HCT116 (cell line): ENCODE measurements at regions of chr10 and their contacts with region 1.

Region 1: GRCh38 chr10:43265799-43266721 is 805 bp downstream of the RASGEF1A start:
- DNase-seq: no peak
- ATAC-seq: peak; percentile 72
- H3K4me3 ChIP-seq: no peak overlapping the region
- H3K27ac ChIP-seq: no peak overlapping the region
- H3K4me1 ChIP-seq: no peaks in the 10 kb centered on the region
- H3K27me3 ChIP-seq: peaks cover 13% of the 10 kb centered on the region; the same call in 1 of the 2 replicates
- CTCF ChIP-seq: peak; percentile 40 to 53 (median 49); a peak in 5 of 6 replicates
- POLR2A ChIP-seq: no peak
- RAD21 ChIP-seq: peak; percentile 68

Region 2: DNA sequence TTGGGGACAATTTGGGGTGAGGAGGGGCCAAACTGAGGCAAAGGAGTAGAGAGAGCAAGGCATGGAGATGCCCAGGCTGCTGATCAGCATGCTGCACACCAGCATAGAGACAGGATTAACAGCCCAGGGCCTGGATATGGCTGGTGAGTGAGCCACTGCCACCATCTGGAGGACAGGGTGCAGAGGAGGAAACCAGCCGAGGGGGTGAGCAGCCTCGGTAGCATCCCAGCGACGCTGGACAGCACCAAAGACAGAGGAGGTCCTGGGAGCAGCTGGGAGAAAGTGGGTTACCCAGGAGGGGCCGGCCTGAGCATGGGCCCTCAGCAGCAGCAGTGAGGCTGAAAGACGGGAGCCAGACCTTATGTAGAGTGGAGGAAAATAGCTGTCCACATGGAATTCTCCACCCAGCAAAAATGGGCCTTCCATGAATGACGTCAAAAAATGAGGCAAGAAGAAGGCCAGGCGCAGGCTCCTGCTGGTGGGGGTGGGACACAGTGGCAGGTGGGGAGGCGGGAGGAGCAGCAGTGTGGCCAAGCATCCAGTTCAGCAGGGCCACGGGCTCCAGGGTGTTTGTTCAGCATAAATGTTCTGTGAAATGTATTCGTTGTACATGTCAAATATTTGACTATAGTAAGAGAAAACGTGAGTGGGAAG is 172.5 kb before region 1 on chr10:
- CTCF ChIA-PET with region 1: no interaction called
- POLR2A ChIA-PET with region 1: no interaction called
- RAD21 ChIA-PET with region 1: no interaction called
- intact Hi-C with region 1: no loop called
- DNase-seq: no peak
- ATAC-seq: peak; percentile 72
- H3K4me3 ChIP-seq: no peak overlapping the region
- H3K27ac ChIP-seq: no peak overlapping the region
- H3K4me1 ChIP-seq: no peaks in the 10 kb centered on the region
- H3K27me3 ChIP-seq: no peaks in the 10 kb centered on the region
- CTCF ChIP-seq: no peak
- POLR2A ChIP-seq: no peak
- RAD21 ChIP-seq: peak; percentile 34; the same call in 1 of the 2 replicates

Region 3: GRCh38 chr10:43255634-43256431 is 10.2 kb before region 1 on chr10:
- CTCF ChIA-PET with region 1: interaction called, 10 read pairs
- POLR2A ChIA-PET with region 1: no interaction called
- RAD21 ChIA-PET with region 1: interaction called in 1 of 2 experiments, 5 read pairs
- intact Hi-C with region 1: no loop called
- DNase-seq: peak; percentile 21
- ATAC-seq: peak; percentile 95
- H3K4me3 ChIP-seq: no peak overlapping the region
- H3K27ac ChIP-seq: no peak overlapping the region
- H3K4me1 ChIP-seq: peaks cover 0 to 5% of the 10 kb centered on the region in 2 experiments; a peak in 1 of 4 replicates
- H3K27me3 ChIP-seq: no peaks in the 10 kb centered on the region
- CTCF ChIP-seq: peak; percentile 78 to 95 (median 88)
- POLR2A ChIP-seq: no peak
- RAD21 ChIP-seq: peak; percentile 62

Region 4: GRCh38 chr10:43348511-43349312 is 82.7 kb after region 1 on chr10:
- CTCF ChIA-PET with region 1: no interaction called
- POLR2A ChIA-PET with region 1: no interaction called
- RAD21 ChIA-PET with region 1: no interaction called
- intact Hi-C with region 1: loop called (anchors 1 kb)
- DNase-seq: peak; percentile 52
- ATAC-seq: peak; percentile 98
- H3K4me3 ChIP-seq: no peak overlapping the region
- H3K27ac ChIP-seq: no peak overlapping the region
- H3K4me1 ChIP-seq: peaks cover 6 to 26% of the 10 kb centered on the region in 2 experiments
- H3K27me3 ChIP-seq: no peaks in the 10 kb centered on the region
- CTCF ChIP-seq: peak; percentile 97 to 99 (median 98)
- POLR2A ChIP-seq: no peak
- RAD21 ChIP-seq: peak; percentile 97

Region 5: DNA sequence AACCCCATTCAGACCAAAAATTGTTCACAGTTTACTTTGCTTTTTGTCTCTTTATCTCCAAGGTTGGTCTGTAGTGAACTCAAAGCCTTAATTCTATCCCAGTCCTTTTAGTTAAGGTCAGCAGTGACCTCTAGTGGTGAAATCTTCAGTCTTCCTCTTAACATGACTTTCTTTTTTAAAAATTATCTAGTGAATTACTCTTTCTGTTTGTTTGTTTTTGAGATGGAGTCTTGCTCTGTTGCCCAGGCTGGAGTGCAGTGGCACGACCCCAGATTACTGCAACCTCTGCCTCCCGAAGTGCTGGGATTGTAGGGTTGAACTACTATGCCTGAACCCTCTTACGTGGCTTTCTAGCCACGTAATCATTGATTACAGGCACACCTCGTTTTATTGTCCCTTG is 195.9 kb after region 1 on chr10:
- CTCF ChIA-PET with region 1: no interaction called
- POLR2A ChIA-PET with region 1: no interaction called
- RAD21 ChIA-PET with region 1: no interaction called
- intact Hi-C with region 1: loop called (anchors 2 kb)
- DNase-seq: peak; percentile 80
- ATAC-seq: peak; percentile 85
- H3K4me3 ChIP-seq: no peak overlapping the region
- H3K27ac ChIP-seq: no peak overlapping the region
- H3K4me1 ChIP-seq: no peaks in the 10 kb centered on the region; a peak in 1 of 4 replicates
- H3K27me3 ChIP-seq: no peaks in the 10 kb centered on the region
- CTCF ChIP-seq: peak; percentile 62 to 78 (median 76)
- POLR2A ChIP-seq: no peak
- RAD21 ChIP-seq: peak; percentile 84

Region 6: DNA sequence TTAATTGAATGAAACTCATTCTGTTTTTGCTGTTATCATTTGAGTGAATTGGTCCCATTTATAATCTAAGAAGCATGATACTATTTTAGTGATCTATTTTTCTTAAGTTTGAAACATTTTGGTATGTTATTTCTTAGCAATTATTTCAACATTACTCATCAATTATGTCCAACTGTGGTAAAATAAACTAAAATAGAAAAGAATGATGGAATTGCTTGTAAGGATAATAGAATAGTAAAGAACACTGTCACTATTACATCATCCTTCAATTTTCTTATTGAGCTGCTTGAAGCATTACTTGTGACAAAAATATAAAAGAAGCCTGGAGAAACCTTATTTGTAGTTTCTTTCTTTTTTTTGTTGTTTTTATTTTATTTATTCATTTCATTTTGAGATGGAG is 213.2 kb after region 1 on chr10:
- CTCF ChIA-PET with region 1: no interaction called
- POLR2A ChIA-PET with region 1: no interaction called
- RAD21 ChIA-PET with region 1: no interaction called
- intact Hi-C with region 1: no loop called
- DNase-seq: no peak
- ATAC-seq: no peak
- H3K4me3 ChIP-seq: no peak overlapping the region
- H3K27ac ChIP-seq: no peak overlapping the region
- H3K4me1 ChIP-seq: no peaks in the 10 kb centered on the region
- H3K27me3 ChIP-seq: no peaks in the 10 kb centered on the region
- CTCF ChIP-seq: no peak
- POLR2A ChIP-seq: no peak
- RAD21 ChIP-seq: no peak